ENCODE measurements at regions of chr1 and their contacts with region 1.

Region 1: GRCh38 chr1:27234049-27234882 is at the start of gene WDTC1:
- DNase-seq: peak; percentile 95
- H3K4me3 Mint-ChIP-seq: peak within 1 kb of the TSS; percentile 98
- H3K27ac Mint-ChIP-seq: peak within 1 kb of the TSS; percentile 68
- H3K4me1 Mint-ChIP-seq: peaks cover 12% of the 10 kb centered on the region
- H3K27me3 Mint-ChIP-seq: no peaks in the 10 kb centered on the region
- CTCF ChIP-seq: no peak
- total RNA-seq, gene WDTC1: 15.7 and 18.9 TPM in 2 replicates

Region 2: GRCh38 chr1:27246194-27246593 is 11.9 kb after region 1 on chr1:
- CTCF ChIA-PET with region 1: no interaction called
- POLR2A ChIA-PET with region 1: interaction called, 15 read pairs
- intact Hi-C with region 1: no loop called
- DNase-seq: no peak
- H3K4me3 Mint-ChIP-seq: no peak overlapping the region
- H3K27ac Mint-ChIP-seq: no peak overlapping the region
- H3K4me1 Mint-ChIP-seq: no peaks in the 10 kb centered on the region
- H3K27me3 Mint-ChIP-seq: no peaks in the 10 kb centered on the region
- CTCF ChIP-seq: no peak

Region 3: GRCh38 chr1:27489910-27490741 is 255.9 kb after region 1 on chr1 and contains the start of gene WASF2:
- CTCF ChIA-PET with region 1: no interaction called
- POLR2A ChIA-PET with region 1: no interaction called
- intact Hi-C with region 1: no loop called
- DNase-seq: peak; percentile 96
- H3K4me3 Mint-ChIP-seq: peak within 1 kb of the TSS; percentile 85
- H3K27ac Mint-ChIP-seq: peak within 1 kb of the TSS; percentile 100
- H3K4me1 Mint-ChIP-seq: peaks cover 14% of the 10 kb centered on the region
- H3K27me3 Mint-ChIP-seq: no peaks in the 10 kb centered on the region
- CTCF ChIP-seq: no peak
- total RNA-seq, gene WASF2: 131 and 154 TPM in 2 replicates